ENCODE measurements at regions of chr2 and their contacts with region 1.

Region 1: GRCh38 chr2:201260302-201260800 is at the start of gene CASP8:
- DNase-seq: no peak
- total RNA-seq, gene CASP8: 34.6 and 55.9 TPM in 2 replicates

Region 2: DNA sequence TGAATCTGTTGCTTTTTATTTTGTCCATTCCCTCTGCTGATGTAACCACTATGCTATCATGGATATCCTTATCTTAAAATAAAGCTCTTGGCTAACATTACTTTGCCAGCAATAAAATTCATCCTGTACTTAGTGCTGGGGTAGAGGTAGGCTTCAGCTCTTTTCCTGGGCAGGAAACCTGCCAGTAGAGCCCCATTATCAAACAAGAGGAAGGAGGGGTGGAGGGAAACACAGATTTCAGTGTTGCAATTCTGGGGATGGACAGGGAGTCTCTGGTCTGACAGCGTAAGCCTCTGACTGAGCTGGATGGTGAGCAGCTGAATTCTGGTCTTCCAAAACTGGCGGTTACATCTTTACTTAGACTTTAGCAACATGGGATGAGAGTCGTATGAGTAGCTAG is 47.5 kb after region 1 on chr2:
- in situ Hi-C with region 1: no loop called
- DNase-seq: no peak

Region 3: GRCh38 chr2:201440182-201440581 is 179.8 kb after region 1 on chr2:
- in situ Hi-C with region 1: loop called (anchors 10 kb)
- DNase-seq: peak; percentile 42